ENCODE measurements at regions of chr1 and their contacts with region 1.

Region 1: GRCh38 chr1:247111700-247112478 is 7.7 kb upstream of the ZNF669 start:
- DNase-seq: peak; percentile 63 to 87
- H3K4me3 ChIP-seq: peak overlapping the region; percentile 74 to 100
- H3K27ac ChIP-seq: peak overlapping the region; percentile 79 to 95
- H3K4me1 ChIP-seq: peaks cover 0 to 14% (median 11%) of the 10 kb centered on the region in 4 donors
- H3K27me3 ChIP-seq: peaks cover 0 to 3% of the 10 kb centered on the region in 2 donors
- CTCF ChIP-seq: no peak

Region 2: DNA sequence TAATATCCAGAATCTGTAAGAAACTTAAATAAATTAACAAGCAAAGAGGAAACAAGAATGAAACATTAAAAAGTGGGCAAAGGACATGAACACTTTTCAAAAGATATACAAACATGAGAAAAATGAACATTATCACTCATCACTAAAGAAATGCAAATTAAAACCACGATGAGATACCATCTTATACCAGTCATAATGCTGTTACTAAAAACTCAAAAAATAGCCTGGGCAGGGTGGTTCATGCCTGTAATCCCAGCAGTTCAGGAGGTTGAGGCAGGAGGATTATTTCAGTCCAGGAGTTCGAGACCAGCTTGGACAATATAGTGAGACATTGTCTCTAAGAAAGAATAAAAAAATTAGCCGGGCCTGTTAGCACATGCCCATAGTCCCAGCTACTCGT is 53.8 kb after region 1 on chr1:
- intact Hi-C with region 1: loop called (anchors 10 kb)
- DNase-seq: no peak
- H3K4me3 ChIP-seq: no peak overlapping the region
- H3K27ac ChIP-seq: no peak overlapping the region
- H3K4me1 ChIP-seq: no peaks in the 10 kb centered on the region
- H3K27me3 ChIP-seq: no peaks in the 10 kb centered on the region
- CTCF ChIP-seq: no peak

Measured in tibial artery (tissue), 4 donors.